HEK293T (cell line): ENCODE measurements at regions of chrX and their contacts with region 1.

Region 1: GRCh38 chrX:108020631-108021030 is 24.2 kb upstream of the VSIG1 start:
- DNase-seq: peak; percentile 51

Region 2: DNA sequence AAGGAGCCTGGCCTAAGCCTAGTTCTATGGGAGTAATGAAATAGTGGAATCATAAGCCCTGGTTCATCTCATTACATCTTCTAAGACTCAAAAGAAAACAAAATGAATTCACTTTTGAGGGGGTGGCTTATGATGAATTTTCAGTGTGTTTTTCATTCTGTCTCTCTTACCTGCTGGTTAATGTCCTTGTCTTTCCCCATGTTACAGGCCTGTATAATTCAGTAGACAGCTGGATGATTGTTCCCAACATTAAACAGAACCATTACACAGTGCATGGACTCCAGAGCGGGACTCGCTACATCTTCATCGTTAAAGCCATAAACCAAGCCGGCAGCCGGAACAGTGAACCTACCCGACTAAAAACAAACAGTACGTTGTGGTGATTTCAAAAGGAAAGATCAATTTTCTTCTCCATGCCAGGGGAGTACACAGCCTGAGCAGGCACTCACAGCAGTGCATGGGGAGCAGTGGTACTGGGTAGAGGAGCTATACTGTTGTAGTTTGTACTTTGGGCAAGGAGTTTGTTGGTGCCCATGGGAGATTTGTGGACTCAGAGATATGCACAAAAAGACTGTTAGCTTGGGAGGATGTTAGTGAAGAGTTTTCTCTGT is 96.4 kb before region 1 on chrX:
- CTCF ChIA-PET with region 1: no interaction called
- POLR2A ChIA-PET with region 1: no interaction called
- DNase-seq: no peak

Region 3: DNA sequence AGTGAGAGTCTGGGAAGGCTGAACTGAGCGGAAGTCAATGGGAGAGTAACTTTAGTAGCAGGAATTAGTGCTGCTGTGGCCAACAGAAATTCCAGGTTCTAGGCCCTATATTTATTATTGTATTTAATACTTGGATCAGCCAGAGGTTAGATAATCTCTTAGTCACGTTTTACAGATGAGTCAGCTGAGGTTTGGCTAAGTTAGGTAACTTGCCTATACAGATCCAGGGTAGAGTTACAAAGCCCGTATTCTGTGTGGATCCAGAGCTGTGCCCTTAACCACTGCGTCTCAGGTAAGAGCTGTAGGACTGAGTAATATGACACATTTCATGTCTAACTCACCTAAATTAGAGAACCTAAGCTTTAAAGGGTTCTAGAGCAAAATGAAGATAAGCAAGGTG is 50.3 kb after region 1 on chrX:
- CTCF ChIA-PET with region 1: interaction called, 13 read pairs
- POLR2A ChIA-PET with region 1: no interaction called
- DNase-seq: no peak